ENCODE measurements at regions of chr17 and their contacts with region 1.

Region 1: GRCh38 chr17:74790161-74791054 is 14.3 kb upstream of the NAT9 start:
- DNase-seq: no peak
- CTCF ChIP-seq: no peak

Region 2: DNA sequence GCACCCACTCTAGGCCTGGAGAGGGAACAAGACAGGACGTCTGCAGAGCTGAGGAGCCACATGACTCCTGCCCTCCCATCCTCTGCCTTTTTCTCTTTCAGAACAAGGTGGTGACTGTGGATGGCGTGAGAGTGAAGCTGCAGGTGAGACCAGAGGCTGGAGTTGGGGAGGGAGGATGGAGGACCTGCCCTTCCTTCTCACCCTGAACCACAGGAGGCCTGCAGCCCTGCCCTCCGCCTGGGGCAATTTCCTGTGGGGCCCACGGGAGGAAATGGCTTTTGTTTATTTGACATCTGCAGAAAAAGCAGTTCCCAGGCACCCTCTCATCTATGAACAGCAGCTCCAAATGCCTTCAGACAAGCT is 48.3 kb before region 1 on chr17:
- CTCF ChIA-PET with region 1: interaction called, 23 read pairs
- POLR2A ChIA-PET with region 1: no interaction called
- DNase-seq: peak; percentile 62
- CTCF ChIP-seq: no peak

Region 3: GRCh38 chr17:74770498-74771318 is 19.7 kb before region 1 on chr17:
- CTCF ChIA-PET with region 1: interaction called, 143 read pairs
- POLR2A ChIA-PET with region 1: no interaction called
- DNase-seq: peak; percentile 75
- CTCF ChIP-seq: peak; percentile 95

Region 4: GRCh38 chr17:74815550-74816370 is 25.4 kb after region 1 on chr17:
- CTCF ChIA-PET with region 1: interaction called, 22 read pairs
- POLR2A ChIA-PET with region 1: no interaction called
- DNase-seq: no peak
- CTCF ChIP-seq: no peak

Region 5: DNA sequence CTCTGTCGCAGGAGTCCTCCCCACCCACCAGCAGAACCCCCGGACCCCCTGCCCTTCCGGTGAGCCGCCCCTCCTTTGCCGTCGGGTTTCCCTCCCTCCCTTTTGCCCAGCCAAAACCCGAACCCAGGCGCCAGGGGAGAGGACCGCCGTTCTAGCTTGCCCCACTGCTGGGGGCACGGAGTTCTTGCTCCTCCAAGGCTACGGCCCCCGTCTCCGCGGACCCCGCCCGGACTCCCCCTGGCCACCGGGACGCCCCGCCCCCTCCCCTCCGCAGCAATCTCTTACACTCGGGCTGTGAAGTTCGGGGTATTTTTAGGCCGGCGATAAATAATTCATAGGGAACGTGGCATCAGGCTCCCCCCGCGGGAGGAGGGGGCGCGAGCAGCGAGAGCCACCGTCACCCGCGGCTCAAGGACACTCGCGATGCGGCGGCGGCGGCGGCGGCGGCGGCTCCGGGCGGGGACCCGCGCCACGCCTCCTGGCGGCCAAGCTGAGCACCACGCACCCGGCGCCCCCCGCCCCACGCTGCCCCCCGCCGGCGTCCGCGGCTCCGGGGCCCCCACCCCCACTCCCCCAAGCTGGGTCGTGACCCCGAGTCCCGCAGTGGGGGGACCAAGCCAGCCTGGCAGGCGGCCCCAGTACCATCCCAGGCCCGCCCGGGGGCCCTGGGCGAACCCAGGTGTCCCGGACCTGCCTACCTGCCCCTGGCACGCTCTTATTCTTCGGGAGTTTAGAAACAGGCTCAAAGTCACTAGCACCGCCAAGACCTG is 69.2 kb after region 1 on chr17 and contains the start of gene GRIN2C:
- CTCF ChIA-PET with region 1: interaction called, 248 read pairs
- POLR2A ChIA-PET with region 1: interaction called, 3 read pairs
- DNase-seq: peak; percentile 53
- CTCF ChIP-seq: peak; percentile 16

Region 6: DNA sequence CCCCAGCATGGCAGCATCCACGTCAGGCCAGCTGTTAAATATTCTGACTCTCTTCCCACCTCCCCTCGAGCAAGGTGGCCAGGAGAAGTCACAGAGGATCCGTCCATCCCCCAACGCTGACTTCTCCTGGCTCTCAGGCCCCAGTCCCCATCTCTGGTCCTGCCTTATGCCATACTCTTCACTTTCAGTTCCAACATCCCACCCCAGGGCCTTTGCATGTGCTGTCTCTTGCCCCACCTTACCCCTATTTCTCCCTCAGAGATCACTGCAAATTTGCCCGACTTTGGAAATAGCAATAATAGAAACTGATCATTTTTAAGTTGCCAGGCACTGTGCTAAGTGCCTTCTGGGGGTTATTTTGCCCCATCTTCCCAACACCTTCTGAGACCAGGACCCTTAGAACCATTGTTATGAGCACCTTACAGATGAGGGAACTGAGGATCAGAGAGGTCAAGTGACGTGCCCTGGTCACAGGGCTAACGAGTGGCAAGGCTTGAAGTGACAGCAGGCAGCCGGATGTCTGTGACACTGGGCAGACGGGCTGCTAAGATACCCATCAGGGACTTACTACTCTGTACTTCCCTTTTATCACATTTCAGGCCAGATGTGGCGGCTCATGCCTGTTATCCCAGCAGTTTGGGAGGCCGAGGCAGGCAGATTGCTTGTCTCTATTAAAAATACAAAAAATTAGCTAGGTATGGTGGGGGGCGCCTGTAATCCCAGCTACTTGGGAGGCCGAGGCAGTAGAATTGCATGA is 164.4 kb after region 1 on chr17:
- CTCF ChIA-PET with region 1: interaction called, 14 read pairs
- POLR2A ChIA-PET with region 1: no interaction called
- DNase-seq: no peak
- CTCF ChIP-seq: no peak